Activated CD4-positive, alpha-beta memory T cell treated with anti-CD3 and anti-CD28 coated beads for 36 hours (primary cell): ENCODE measurements at regions of chr10 and their contacts with region 1.

Region 1: GRCh38 chr10:27534161-27534700 is 30.1 kb downstream of the RAB18 start:
- DNase-seq: no peak
- H3K4me3 Mint-ChIP-seq: no peak overlapping the region
- H3K27ac Mint-ChIP-seq: no peak overlapping the region
- H3K4me1 Mint-ChIP-seq: peaks cover 25% of the 10 kb centered on the region
- H3K27me3 Mint-ChIP-seq: no peaks in the 10 kb centered on the region

Region 2: DNA sequence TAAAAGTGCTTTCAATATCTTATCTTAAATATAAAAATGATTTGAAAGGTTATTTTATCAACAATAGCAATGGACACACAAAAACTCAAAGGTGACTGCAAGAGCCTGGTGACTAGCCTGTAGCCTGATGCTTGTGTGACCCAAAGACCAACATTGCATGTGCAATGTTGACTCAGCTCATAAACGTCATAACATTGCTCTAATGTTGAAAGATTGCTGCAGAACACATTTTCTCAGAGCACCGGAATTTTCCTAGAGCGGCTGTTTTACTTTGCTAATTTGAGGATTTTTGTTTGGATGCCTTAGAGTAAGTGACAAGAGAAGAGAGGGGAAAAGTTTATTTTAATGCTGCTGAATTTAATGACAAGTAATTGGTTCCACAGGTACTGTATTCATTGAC is 77.0 kb after region 1 on chr10:
- CTCF ChIA-PET with region 1: no interaction called
- POLR2A ChIA-PET with region 1: no interaction called
- intact Hi-C with region 1: no loop called
- DNase-seq: no peak
- H3K4me3 Mint-ChIP-seq: no peak overlapping the region
- H3K27ac Mint-ChIP-seq: no peak overlapping the region
- H3K4me1 Mint-ChIP-seq: no peaks in the 10 kb centered on the region
- H3K27me3 Mint-ChIP-seq: no peaks in the 10 kb centered on the region

Region 3: DNA sequence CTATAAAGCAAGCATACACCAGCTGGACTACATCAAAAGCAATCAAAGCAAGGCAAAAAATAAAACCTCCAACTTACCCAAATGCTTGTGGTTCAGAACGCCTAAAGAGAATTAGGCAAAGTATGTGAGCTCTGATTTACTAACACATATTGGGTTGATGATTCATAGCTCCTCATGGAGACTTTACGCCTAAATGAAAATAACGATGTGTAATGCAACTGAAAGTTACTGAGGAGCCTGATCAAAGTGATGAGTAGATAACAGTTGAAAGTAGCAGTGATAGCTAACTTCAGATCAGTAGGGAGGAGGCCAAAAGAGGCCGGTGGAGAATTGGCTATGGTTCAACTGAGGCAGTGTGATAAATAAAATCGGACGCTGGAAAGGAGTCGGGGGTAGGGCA is 683.6 kb after region 1 on chr10:
- CTCF ChIA-PET with region 1: no interaction called
- POLR2A ChIA-PET with region 1: no interaction called
- intact Hi-C with region 1: loop called (anchors 5 kb)
- DNase-seq: peak; percentile 27
- H3K4me3 Mint-ChIP-seq: no peak overlapping the region
- H3K27ac Mint-ChIP-seq: no peak overlapping the region
- H3K4me1 Mint-ChIP-seq: peaks cover 25% of the 10 kb centered on the region
- H3K27me3 Mint-ChIP-seq: no peaks in the 10 kb centered on the region

Region 4: DNA sequence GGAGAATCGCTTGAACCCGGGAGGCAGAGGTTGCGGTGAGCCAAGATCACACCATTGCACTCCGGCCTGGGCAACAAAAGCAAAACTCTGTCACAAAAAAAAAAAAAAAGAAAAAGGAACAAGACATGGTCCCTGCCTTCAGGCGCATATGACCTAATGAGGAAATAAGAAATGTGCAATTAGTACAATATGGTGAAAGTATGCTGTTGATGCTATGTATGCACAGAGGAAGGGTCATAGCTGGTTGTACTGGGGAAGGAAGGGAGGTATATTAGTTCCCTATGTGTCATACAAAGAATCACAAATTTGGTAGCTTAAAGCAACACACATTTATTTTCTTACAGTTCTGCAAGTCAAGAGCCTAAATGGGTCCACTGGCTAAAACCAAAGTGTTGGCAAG is 866.5 kb after region 1 on chr10:
- CTCF ChIA-PET with region 1: no interaction called
- POLR2A ChIA-PET with region 1: no interaction called
- intact Hi-C with region 1: no loop called
- DNase-seq: no peak
- H3K4me3 Mint-ChIP-seq: no peak overlapping the region
- H3K27ac Mint-ChIP-seq: no peak overlapping the region
- H3K4me1 Mint-ChIP-seq: no peaks in the 10 kb centered on the region
- H3K27me3 Mint-ChIP-seq: peaks cover 2% of the 10 kb centered on the region